Activated T-helper 1 cell treated with anti-CD3 and anti-CD28 coated beads, Interleukin-12 subunit alpha, Interleukin-12 subunit beta, Interleukin-2, Interleukin-4 antibody, amounts not matched to agents 30 ng/mL and 10 ng/mL and 1 ng/mL, durations not matched to agents 14 hours and 24 hours and 36 hours (primary cell): ENCODE measurements at regions of chr11 and their contacts with region 1.

Region 1: DNA sequence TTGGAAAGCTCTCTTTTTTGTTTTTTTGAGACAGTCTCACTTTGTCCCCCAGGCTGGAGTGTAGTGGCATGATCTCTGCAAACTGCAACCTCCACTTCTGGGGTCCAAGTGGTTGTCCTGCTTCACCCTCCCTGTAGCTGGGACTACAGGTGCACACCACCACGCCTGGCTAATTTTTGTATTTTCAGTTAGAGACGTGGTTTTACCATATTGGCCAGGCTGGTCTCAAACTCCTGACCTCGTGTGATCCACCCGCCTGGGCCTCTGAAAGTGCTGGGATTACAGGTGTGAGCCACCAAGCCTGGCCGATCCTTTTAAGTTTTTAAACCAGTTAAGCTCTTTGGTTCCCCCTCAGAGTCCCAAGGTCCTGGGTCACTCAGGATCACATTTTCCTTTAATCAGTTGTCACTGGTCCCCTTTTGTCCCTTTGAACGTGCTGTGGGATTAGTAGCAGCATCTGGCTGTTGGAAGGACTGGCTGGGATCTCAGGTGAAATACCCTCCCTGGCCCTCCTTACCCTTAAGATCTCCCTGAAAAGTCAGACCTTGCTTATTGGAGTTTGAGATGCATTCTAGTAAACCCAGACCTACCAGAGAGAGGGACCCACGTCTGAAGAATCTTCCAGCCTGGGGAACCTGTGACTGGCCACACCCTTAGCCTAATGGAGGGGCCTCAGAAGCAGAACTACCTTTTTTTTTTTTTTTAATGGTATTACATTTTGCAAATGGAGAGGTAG is 8.1 kb downstream of the MALAT1 start:
- DNase-seq: peak; percentile 31
- H3K4me3 Mint-ChIP-seq: no peak overlapping the region
- H3K27ac Mint-ChIP-seq: peak overlapping the region; percentile 72
- H3K4me1 Mint-ChIP-seq: peaks cover 56% of the 10 kb centered on the region
- H3K27me3 Mint-ChIP-seq: no peaks in the 10 kb centered on the region

Region 2: GRCh38 chr11:65261591-65262380 is 245.2 kb before region 1 on chr11 and contains the start of gene POLA2:
- intact Hi-C with region 1: loop called (anchors 5 kb)
- DNase-seq: peak; percentile 97
- H3K4me3 Mint-ChIP-seq: peak within 1 kb of the TSS; percentile 94
- H3K27ac Mint-ChIP-seq: peak within 1 kb of the TSS; percentile 97
- H3K4me1 Mint-ChIP-seq: peaks cover 47% of the 10 kb centered on the region
- H3K27me3 Mint-ChIP-seq: no peaks in the 10 kb centered on the region
- total RNA-seq, gene POLA2: 78.2 and 78.9 TPM in 2 replicates

Region 3: GRCh38 chr11:65274735-65275682 is 231.9 kb before region 1 on chr11:
- intact Hi-C with region 1: loop called (anchors 1 kb)
- DNase-seq: no peak
- H3K4me3 Mint-ChIP-seq: no peak overlapping the region
- H3K27ac Mint-ChIP-seq: no peak overlapping the region
- H3K4me1 Mint-ChIP-seq: peaks cover 16% of the 10 kb centered on the region
- H3K27me3 Mint-ChIP-seq: no peaks in the 10 kb centered on the region

Region 4: GRCh38 chr11:65366340-65366773 is 140.6 kb before region 1 on chr11:
- intact Hi-C with region 1: loop called (anchors 1 kb)
- DNase-seq: no peak
- H3K4me3 Mint-ChIP-seq: no peak overlapping the region
- H3K27ac Mint-ChIP-seq: no peak overlapping the region
- H3K4me1 Mint-ChIP-seq: no peaks in the 10 kb centered on the region
- H3K27me3 Mint-ChIP-seq: no peaks in the 10 kb centered on the region

Region 5: DNA sequence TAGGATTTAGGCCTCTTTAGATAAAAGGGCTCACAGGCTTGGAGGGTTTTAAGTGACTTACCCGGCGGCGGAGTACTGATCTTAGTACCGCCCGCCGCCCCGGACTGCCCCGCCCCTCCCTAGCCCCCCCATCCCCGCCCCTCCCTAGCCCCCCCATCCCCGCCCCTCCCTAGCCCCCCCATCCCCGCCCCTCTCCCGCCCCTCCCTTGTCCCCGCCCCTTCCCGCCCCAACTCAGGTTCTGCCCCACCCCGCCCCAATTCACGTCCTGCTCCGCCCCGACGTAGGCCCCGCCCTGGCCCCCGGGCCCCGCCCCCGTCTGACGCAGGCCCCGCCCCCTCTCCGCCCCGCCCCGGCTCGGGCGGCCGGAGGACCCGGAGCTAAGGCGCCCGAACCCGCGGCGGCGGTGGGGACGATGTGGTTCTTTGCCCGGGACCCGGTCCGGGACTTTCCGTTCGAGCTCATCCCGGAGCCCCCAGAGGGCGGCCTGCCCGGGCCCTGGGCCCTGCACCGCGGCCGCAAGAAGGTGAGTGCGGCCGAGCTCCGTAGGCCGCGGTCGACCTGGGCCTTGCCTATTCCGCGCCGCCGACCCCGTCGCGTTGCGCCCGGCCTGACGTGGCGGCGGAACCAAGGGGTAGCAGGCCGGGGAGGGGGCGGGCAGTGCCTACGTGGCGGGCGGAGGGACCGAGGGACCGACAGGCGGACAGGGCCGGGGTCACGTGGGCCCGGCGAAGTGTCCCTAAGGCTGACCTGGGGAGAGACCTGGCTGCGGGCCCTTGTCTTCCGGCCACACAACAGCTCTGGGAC is 18.0 kb after region 1 on chr11 and contains the start of gene SCYL1:
- intact Hi-C with region 1: loop called (anchors 1 kb)
- DNase-seq: peak; percentile 71
- H3K4me3 Mint-ChIP-seq: peak within 1 kb of the TSS; percentile 89
- H3K27ac Mint-ChIP-seq: peak within 1 kb of the TSS; percentile 82
- H3K4me1 Mint-ChIP-seq: peaks cover 46% of the 10 kb centered on the region
- H3K27me3 Mint-ChIP-seq: no peaks in the 10 kb centered on the region
- total RNA-seq, gene SCYL1: 103 and 109 TPM in 2 replicates